Transverse colon (tissue), 4 donors: ENCODE measurements at regions of chr7 and their contacts with region 1.

Region 1: DNA sequence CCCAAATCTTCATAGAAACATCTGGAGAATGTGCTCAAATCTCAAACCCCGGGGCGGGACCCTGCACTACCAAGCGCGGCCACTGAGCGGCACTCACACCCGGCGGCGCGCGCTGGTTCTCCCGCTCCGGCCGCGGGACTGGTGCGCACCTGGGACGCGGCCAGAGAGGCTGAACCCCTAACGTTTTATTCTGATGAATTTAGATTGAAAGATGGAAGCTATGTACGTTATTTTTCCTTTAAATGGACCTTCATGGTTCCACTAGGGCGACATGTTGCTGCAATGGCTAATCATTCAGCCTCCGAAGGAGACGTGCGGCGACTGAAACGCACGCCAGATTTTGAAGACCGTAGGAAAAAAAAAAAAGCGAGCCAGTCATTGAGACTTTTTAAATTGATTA is 107.0 kb upstream of the INSIG1 start:
- DNase-seq: peak; percentile 52
- H3K4me3 ChIP-seq: no peak overlapping the region
- H3K27ac ChIP-seq: no peak overlapping the region
- H3K4me1 ChIP-seq: no peaks in the 10 kb centered on the region
- H3K27me3 ChIP-seq: peaks cover 25% of the 10 kb centered on the region
- CTCF ChIP-seq: peak; percentile 81 to 97 (median 91)
- EP300 ChIP-seq: no peak
- POLR2A ChIP-seq: no peak

Region 2: GRCh38 chr7:154451480-154452457 is 738.9 kb before region 1 on chr7:
- in situ Hi-C with region 1: no loop called
- intact Hi-C with region 1: no loop called
- DNase-seq: no peak
- H3K4me3 ChIP-seq: no peak overlapping the region
- H3K27ac ChIP-seq: no peak overlapping the region
- H3K4me1 ChIP-seq: no peaks in the 10 kb centered on the region
- H3K27me3 ChIP-seq: no peaks in the 10 kb centered on the region
- CTCF ChIP-seq: no peak
- EP300 ChIP-seq: no peak
- POLR2A ChIP-seq: no peak

Region 3: DNA sequence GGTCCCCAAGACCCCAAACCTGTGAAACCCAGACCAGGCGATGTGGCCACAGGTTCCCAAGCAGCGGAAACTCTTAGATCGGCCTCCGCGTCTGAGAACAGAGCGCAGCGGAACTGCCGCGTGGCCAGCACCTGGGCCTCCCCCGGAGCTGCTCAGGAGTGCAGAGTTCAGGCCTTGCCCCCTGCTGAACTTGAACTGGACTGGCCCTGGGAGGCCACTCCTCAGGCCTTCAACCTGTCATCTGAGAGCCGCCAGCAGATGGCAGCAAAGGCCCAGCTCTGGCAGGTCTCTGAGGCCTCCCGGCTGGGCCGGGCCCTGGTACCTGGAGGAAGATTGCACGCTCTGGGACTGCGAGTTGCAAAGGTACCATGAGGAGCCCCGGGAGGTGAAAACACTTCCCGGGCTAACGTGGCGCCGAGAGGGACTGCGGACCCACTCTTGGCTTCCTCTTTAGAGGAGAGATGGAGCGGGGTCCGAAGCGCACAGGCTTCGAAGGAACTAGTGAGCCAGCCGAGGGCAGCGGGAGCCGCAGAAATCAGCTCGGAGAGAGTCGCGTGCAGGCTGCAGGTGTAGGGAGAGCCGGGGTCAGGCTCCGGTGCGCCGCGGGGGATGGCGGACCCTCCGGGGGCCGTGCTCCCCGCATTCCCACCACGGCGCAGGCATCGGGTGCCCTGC is 276.9 kb before region 1 on chr7:
- in situ Hi-C with region 1: loop called in 2 of 4 experiments (anchors 25 kb)
- intact Hi-C with region 1: no loop called
- DNase-seq: peak; percentile 89
- H3K4me3 ChIP-seq: peak overlapping the region in 3 of 4 donors; percentile 2 to 42 (median 18)
- H3K27ac ChIP-seq: no peak overlapping the region
- H3K4me1 ChIP-seq: peaks cover 0 to 8% (median 3%) of the 10 kb centered on the region in 4 donors
- H3K27me3 ChIP-seq: peaks cover 25% of the 10 kb centered on the region
- CTCF ChIP-seq: peak; percentile 80 to 92 (median 86)
- EP300 ChIP-seq: no peak
- POLR2A ChIP-seq: no peak

Region 4: GRCh38 chr7:154919344-154920225 is 271.1 kb before region 1 on chr7:
- in situ Hi-C with region 1: loop called in 2 of 4 experiments (anchors 25 kb)
- intact Hi-C with region 1: loop called (anchors 5 kb)
- DNase-seq: no peak
- H3K4me3 ChIP-seq: no peak overlapping the region
- H3K27ac ChIP-seq: no peak overlapping the region
- H3K4me1 ChIP-seq: peaks cover 0 to under 1% (median 0%) of the 10 kb centered on the region in 4 donors
- H3K27me3 ChIP-seq: peaks cover 17% of the 10 kb centered on the region
- CTCF ChIP-seq: no peak
- EP300 ChIP-seq: no peak
- POLR2A ChIP-seq: no peak

Region 5: GRCh38 chr7:155344600-155345433 is 154.1 kb after region 1 on chr7:
- in situ Hi-C with region 1: loop called (anchors 10 to 25 kb)
- intact Hi-C with region 1: loop called (anchors 5 kb)
- DNase-seq: peak; percentile 77
- H3K4me3 ChIP-seq: peak overlapping the region in 3 of 4 donors; percentile 4 to 48 (median 35)
- H3K27ac ChIP-seq: no peak overlapping the region
- H3K4me1 ChIP-seq: peaks cover 3 to 10% (median 6%) of the 10 kb centered on the region in 4 donors
- H3K27me3 ChIP-seq: peaks cover 17% of the 10 kb centered on the region
- CTCF ChIP-seq: peak; percentile 62 to 97 (median 91)
- EP300 ChIP-seq: no peak
- POLR2A ChIP-seq: no peak

Region 6: DNA sequence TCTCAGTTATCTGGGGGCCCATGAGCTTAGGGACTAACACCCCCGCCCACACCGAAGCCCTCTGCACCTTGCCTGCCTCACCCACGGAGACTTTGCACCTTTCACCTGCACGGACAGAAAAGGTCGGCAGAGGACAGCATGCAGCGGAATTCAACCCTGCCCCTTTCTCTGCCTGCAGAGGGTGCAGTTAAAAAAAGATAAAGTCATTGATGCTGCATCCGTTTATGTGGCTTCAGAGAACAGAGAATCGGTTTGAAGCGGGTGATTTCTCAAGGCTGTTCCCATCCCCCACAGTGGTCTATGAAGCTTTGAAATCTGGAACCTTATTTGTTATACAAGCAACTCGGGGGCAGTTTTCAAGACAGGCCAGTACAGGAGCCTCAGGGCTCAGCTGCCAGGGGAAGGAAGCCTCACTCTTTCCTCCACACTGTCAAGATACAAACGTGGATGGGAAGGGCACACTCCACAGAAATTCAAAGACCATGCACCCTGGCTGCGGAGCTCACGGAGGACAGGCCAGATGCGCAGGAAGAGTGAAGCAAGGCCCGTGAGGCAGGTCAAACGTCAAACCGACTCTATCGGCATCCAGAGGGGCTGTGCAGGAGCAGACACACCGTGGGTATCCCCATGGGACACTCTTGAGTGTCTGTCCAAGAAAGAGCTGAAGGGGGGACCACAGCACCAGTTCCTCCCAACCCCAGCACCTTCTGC is 173.3 kb after region 1 on chr7:
- in situ Hi-C with region 1: no loop called
- intact Hi-C with region 1: no loop called
- DNase-seq: no peak
- H3K4me3 ChIP-seq: no peak overlapping the region
- H3K27ac ChIP-seq: no peak overlapping the region
- H3K4me1 ChIP-seq: no peaks in the 10 kb centered on the region
- H3K27me3 ChIP-seq: peaks cover 66% of the 10 kb centered on the region
- CTCF ChIP-seq: no peak
- EP300 ChIP-seq: no peak
- POLR2A ChIP-seq: no peak

Region 7: DNA sequence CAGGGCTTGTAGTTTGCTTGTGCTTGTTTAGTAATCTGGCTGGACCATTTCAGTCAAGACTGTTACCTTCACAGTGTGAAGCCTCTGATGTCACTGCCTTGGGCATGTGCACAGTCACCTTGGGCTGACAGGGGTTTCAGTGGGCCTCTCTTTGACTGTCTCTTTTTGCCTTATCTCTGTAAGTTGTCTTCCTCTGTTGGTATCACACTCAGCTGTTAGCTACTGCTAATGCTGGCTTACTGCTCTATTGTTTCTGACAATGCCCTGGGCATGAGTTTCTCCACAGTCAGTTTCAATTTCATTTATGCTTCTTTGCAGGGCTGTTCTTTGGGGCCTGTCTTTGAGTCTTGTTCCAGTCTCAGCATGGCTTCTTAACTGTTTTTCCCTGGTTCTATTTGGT is 823.5 kb after region 1 on chr7:
- in situ Hi-C with region 1: no loop called
- intact Hi-C with region 1: loop called (anchors 5 kb)
- DNase-seq: no peak
- H3K4me3 ChIP-seq: no peak overlapping the region
- H3K27ac ChIP-seq: no peak overlapping the region
- H3K4me1 ChIP-seq: no peaks in the 10 kb centered on the region
- H3K27me3 ChIP-seq: no peaks in the 10 kb centered on the region
- CTCF ChIP-seq: no peak
- EP300 ChIP-seq: no peak
- POLR2A ChIP-seq: no peak